Psoas muscle (tissue), 8 donors: ENCODE measurements at regions of chr2 and their contacts with region 1.

Region 1: GRCh38 chr2:73828818-73829570 is at the start of gene STAMBP:
- DNase-seq: peak; percentile 96 to 98
- ATAC-seq: peak; percentile 84 to 92 (median 90)
- H3K4me3 ChIP-seq: peak within 1 kb of the TSS; percentile 92
- H3K27ac ChIP-seq: peak within 1 kb of the TSS; percentile 99
- H3K4me1 ChIP-seq: peaks cover 44% of the 10 kb centered on the region
- H3K27me3 ChIP-seq: no peaks in the 10 kb centered on the region
- CTCF ChIP-seq: no peak
- total RNA-seq, gene STAMBP: 40.7 to 93.1 (median 57.8) TPM

Region 2: GRCh38 chr2:73451263-73451972 is 377.6 kb before region 1 on chr2:
- intact Hi-C with region 1: no loop called
- DNase-seq: no peak
- ATAC-seq: no peak
- H3K4me3 ChIP-seq: no peak overlapping the region
- H3K27ac ChIP-seq: no peak overlapping the region
- H3K4me1 ChIP-seq: no peaks in the 10 kb centered on the region
- H3K27me3 ChIP-seq: no peaks in the 10 kb centered on the region
- CTCF ChIP-seq: no peak

Region 3: GRCh38 chr2:73728043-73728442 is 101.0 kb before region 1 on chr2:
- intact Hi-C with region 1: no loop called
- DNase-seq: no peak
- ATAC-seq: no peak
- H3K4me3 ChIP-seq: no peak overlapping the region
- H3K27ac ChIP-seq: no peak overlapping the region
- H3K4me1 ChIP-seq: peaks cover 8% of the 10 kb centered on the region
- H3K27me3 ChIP-seq: no peaks in the 10 kb centered on the region
- CTCF ChIP-seq: no peak

Region 4: GRCh38 chr2:73926493-73927338 is 97.7 kb after region 1 on chr2 and contains the start of gene DGUOK:
- intact Hi-C with region 1: loop called in 1 of 2 experiments (anchors 10 kb)
- DNase-seq: peak; percentile 97 to 98
- ATAC-seq: peak; percentile 100
- H3K4me3 ChIP-seq: peak within 1 kb of the TSS; percentile 94
- H3K27ac ChIP-seq: peak within 1 kb of the TSS; percentile 94
- H3K4me1 ChIP-seq: peaks cover 21% of the 10 kb centered on the region
- H3K27me3 ChIP-seq: no peaks in the 10 kb centered on the region
- CTCF ChIP-seq: no peak
- total RNA-seq, gene DGUOK: 12.9 to 22.9 (median 20.7) TPM

Region 5: GRCh38 chr2:73939419-73939818 is 110.4 kb after region 1 on chr2:
- intact Hi-C with region 1: no loop called
- DNase-seq: peak in 1 of 2 donors; percentile 55
- ATAC-seq: peak; percentile 92 to 97 (median 96)
- H3K4me3 ChIP-seq: no peak overlapping the region
- H3K27ac ChIP-seq: peak overlapping the region; percentile 39
- H3K4me1 ChIP-seq: peaks cover 5% of the 10 kb centered on the region
- H3K27me3 ChIP-seq: no peaks in the 10 kb centered on the region
- CTCF ChIP-seq: peak; percentile 30

Region 6: DNA sequence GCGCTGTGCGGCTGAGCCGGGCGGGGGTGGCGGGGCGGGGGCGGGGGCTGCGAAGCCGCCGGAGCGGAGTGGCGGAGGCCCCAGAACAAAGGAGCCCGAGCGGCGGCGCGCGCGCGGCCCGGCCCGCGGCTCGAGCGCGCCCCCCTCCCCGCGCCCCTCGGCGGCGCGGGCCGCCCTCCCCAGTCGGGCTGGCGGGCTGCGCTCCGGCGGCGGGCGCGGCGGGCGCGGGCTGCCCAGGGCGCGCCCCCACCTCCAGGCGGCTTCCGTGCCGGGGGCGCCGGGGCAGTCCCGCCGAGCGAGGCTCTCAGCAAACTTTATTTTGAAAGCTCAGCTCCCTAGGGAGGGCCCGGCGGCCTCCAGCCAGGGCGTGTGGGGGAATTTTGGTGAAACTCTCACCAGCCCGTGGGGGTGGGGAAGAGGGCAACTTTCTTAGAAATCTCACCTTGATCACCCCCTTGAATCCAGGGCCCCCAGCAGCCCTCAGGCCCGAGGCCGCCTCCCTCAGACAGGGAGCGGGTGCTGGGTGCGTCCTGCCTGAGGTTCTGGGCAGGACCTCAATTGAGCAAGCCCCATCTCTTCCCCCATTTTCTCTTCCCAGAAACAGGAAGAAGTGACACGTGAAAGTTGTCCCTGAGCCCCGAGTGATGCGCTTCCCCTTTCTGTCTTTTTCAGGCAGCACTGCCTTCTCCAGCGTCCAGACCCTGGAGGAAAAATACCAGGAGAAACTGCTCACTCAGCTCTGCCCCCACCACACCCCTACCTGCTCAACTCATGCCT is 156.5 kb after region 1 on chr2:
- intact Hi-C with region 1: loop called in 1 of 2 experiments (anchors 10 kb)
- DNase-seq: peak; percentile 63 to 75
- ATAC-seq: no peak
- H3K4me3 ChIP-seq: peak overlapping the region; percentile 78
- H3K27ac ChIP-seq: peak overlapping the region; percentile 46
- H3K4me1 ChIP-seq: peaks cover 56% of the 10 kb centered on the region
- H3K27me3 ChIP-seq: peaks cover 0 to under 1% (median 0%) of the 10 kb centered on the region in 3 donors
- CTCF ChIP-seq: no peak

Region 7: GRCh38 chr2:74250189-74250631 is 421.2 kb after region 1 on chr2:
- intact Hi-C with region 1: loop called in 1 of 2 experiments (anchors 10 kb)
- DNase-seq: peak; percentile 27 to 64
- ATAC-seq: peak in 3 of 4 donors; percentile 53 to 69 (median 57)
- H3K4me3 ChIP-seq: no peak overlapping the region
- H3K27ac ChIP-seq: no peak overlapping the region
- H3K4me1 ChIP-seq: no peaks in the 10 kb centered on the region
- H3K27me3 ChIP-seq: no peaks in the 10 kb centered on the region
- CTCF ChIP-seq: peak; percentile 69

Region 8: DNA sequence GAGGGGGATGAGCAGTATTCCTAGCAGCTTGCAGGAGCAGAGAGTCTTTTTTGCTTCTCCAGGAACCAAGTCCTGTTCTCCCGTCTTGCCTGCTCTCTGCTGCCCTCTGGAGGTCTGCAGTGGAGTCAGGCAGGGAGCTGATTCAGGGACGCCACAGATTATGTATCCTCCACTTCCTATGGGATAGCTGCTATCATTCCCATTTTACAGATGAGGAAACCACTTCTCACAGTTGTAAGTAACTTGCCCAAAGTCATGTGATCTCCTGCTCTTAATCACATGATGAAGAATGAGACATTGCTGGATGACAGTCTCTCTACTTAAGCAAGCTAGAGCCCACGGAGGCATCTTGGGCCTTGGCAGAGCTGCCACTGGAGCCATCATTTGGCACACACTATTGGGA is 505.9 kb after region 1 on chr2:
- intact Hi-C with region 1: loop called in 1 of 2 experiments (anchors 10 kb)
- DNase-seq: peak; percentile 75 to 84
- ATAC-seq: peak; percentile 85 to 89 (median 87)
- H3K4me3 ChIP-seq: no peak overlapping the region
- H3K27ac ChIP-seq: no peak overlapping the region
- H3K4me1 ChIP-seq: no peaks in the 10 kb centered on the region
- H3K27me3 ChIP-seq: no peaks in the 10 kb centered on the region
- CTCF ChIP-seq: peak; percentile 95